B cell (primary cell): ENCODE measurements at regions of chr6 and their contacts with region 1.

Region 1: DNA sequence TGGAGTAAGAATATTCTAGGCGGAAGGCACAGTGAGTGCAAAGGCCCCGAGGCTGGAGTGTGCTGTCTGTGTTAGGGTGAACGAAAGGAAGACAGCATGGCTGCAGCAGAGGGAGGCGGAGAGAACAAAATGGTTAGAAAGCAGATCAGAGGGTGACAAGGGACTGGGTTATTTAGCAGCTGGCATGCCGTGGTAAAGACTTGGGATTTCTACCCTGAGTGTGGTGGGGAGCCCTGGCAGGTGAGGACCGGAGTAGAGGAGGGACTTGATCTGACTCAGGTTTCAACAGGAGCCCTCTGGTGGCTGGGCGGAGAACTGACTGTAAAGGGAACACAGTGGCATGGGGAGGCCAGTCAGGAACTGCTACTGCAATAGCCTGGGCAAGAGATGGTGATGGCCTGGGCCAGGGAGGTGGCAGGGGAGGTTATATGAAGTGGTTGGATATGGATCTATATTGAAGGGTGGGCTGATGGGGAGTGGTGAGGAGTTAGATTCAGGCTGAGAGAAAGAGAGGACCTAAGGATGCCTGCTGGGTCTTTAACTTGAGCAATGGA is 38.0 kb downstream of the PIM1 start:
- DNase-seq: peak; percentile 88
- ATAC-seq: peak; percentile 95
- H3K4me3 ChIP-seq: no peak overlapping the region
- H3K4me3 Mint-ChIP-seq: no peak overlapping the region
- H3K27ac ChIP-seq: no peak overlapping the region
- H3K27ac Mint-ChIP-seq: peak overlapping the region; percentile 3
- H3K4me1 ChIP-seq: peaks cover 4 to 12% of the 10 kb centered on the region in 2 donors
- H3K4me1 Mint-ChIP-seq: peaks cover 14% of the 10 kb centered on the region
- H3K27me3 ChIP-seq: peaks cover 0 to 4% (median 0%) of the 10 kb centered on the region in 4 experiments
- H3K27me3 Mint-ChIP-seq: no peaks in the 10 kb centered on the region
- CTCF ChIP-seq: peak; percentile 85

Region 2: DNA sequence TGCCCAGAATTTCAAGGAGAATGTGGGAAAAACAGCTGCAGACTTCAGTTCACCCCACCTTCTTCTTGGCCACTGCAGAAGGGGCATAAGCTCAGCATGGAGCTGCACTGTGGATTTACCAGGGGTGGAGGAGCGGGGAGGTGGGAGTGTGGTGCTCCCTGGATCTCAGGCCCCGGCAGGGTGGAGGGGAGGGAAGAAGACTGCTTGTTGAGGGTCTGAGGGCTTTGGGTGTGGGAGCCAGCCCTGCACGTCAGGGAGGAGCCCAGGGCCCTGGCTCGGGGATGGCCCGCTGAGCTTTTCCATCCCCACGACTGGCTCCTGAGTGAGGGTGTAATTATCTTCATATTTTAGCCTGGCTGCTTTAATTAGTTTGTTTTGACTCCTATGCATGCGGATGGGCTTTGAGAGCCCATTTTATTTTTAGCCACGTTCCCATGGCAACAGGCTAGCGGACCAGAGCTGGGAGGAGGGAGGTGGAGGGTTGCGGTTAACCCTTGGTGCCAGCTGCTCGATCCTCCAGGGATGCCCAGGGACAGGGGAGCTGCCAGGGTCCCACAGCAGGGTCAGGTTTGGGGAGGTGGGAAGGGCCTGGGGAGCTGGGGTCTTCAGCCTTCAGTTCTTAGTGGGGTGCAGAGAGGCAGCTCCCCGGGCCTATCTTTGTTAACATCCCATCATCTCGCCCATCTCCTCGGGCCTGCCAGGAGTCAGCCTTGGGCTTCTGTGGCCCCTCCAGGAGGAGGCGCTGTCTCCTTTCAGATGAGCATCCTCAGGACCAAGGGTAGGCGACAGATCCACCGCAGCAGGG is 442.2 kb before region 1 on chr6:
- CTCF ChIA-PET with region 1: interaction called, 51 read pairs
- POLR2A ChIA-PET with region 1: no interaction called
- intact Hi-C with region 1: loop called (anchors 1 kb)
- DNase-seq: peak; percentile 88
- ATAC-seq: peak; percentile 91
- H3K4me3 ChIP-seq: peak overlapping the region in 1 of 5 experiments; percentile 9
- H3K4me3 Mint-ChIP-seq: peak overlapping the region; percentile 60
- H3K27ac ChIP-seq: no peak overlapping the region
- H3K27ac Mint-ChIP-seq: peak overlapping the region; percentile 60
- H3K4me1 ChIP-seq: peaks cover 45 to 54% of the 10 kb centered on the region in 2 donors
- H3K4me1 Mint-ChIP-seq: peaks cover 41% of the 10 kb centered on the region
- H3K27me3 ChIP-seq: peaks cover 0 to 3% (median 0%) of the 10 kb centered on the region in 4 experiments
- H3K27me3 Mint-ChIP-seq: no peaks in the 10 kb centered on the region
- CTCF ChIP-seq: peak; percentile 92

Region 3: DNA sequence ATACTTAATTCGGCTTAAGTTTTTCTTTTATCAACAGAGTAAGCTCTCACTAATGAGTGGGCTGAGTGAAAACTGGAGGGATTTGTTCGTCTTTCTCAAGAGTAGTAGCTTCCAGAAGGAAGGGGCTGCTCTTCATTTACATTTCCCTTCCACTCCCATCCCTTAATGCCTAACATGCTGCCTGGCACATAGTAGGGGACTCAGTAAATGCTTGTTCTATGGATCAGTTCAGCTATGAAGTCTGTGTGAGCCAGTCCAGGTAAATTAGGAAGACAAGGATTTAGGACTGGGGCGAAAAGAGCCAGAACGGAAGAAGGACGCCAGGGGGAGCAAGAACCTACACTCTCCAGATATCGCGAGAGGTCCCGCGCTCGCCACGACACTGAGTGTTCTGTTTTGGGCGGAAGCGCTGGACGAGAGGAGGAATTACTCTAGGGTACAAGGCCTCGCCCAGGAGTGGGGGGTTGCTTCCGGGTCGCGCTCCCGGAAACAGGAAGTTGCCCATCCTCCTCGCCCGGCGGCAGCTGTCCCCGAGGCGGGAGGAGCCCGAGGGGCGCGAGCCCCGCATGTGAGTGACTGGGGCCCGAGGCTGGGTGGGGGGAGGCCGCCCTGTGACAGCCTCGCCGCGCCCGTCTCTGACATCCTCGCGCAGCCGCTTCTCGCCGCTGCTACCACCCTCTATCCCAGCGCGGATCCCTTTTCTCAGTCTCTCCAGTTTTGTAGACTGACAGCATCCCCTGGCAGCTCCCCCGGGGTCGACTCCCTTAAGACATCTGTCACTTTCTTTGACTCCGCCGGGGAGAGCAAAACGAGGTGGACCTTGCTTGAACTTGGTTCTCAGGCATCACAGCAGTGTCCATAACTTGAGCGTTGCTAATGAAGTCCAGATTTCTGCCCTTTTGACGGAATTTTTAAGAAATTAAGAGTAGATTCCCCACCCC is 322.2 kb before region 1 on chr6 and contains the start of gene C6orf89:
- CTCF ChIA-PET with region 1: interaction called, 24 read pairs
- POLR2A ChIA-PET with region 1: no interaction called
- intact Hi-C with region 1: loop called (anchors 1 kb)
- DNase-seq: peak; percentile 98
- ATAC-seq: peak; percentile 99
- H3K4me3 ChIP-seq: peak within 1 kb of the TSS; percentile 68 to 89 (median 80)
- H3K4me3 Mint-ChIP-seq: peak within 1 kb of the TSS; percentile 90
- H3K27ac ChIP-seq: peak within 1 kb of the TSS; percentile 82 to 92
- H3K27ac Mint-ChIP-seq: peak within 1 kb of the TSS; percentile 92
- H3K4me1 ChIP-seq: peaks cover 17 to 22% of the 10 kb centered on the region in 2 donors
- H3K4me1 Mint-ChIP-seq: peaks cover 32% of the 10 kb centered on the region
- H3K27me3 ChIP-seq: no peaks in the 10 kb centered on the region
- H3K27me3 Mint-ChIP-seq: no peaks in the 10 kb centered on the region
- CTCF ChIP-seq: peak; percentile 86
- total RNA-seq, gene C6orf89: 34.2 and 35.3 TPM in 2 replicates

Region 4: DNA sequence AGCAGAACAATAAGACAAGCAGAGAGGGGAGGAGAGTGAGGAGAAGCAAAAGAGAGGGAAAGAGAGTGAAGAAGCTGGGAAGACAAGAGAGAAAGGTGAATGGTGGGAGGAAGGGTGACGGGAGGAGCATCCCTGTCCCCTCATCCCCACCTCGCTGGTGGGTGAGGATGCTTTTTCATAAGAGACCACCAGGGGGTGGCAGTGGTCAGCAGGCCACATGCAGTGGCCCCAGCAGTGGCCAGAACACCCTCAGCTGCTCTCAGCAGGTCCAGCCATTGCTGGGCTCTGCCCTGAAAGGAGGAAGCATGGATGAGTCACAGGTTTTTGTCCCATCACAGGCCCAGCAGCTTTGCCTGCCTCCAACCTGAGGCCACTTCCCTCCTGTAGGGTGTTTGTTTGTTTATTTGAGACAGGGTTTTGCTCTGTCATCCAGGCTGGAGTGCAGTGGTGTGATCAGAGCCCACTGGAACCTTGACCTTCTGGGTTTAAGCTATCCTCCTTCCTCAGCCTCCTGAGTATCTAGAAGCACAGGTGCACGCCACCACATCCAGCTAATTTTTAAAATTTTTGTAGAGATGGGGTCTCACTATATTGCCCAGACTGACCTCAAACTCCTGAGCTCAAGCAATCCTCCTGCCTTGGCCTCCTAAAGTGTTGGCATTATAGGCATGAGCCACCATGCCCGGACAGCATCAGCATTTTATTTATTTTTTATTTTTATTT is 178.6 kb before region 1 on chr6:
- CTCF ChIA-PET with region 1: interaction called, 587 read pairs
- POLR2A ChIA-PET with region 1: no interaction called
- intact Hi-C with region 1: loop called (anchors 1 kb)
- DNase-seq: peak; percentile 69
- ATAC-seq: peak; percentile 78
- H3K4me3 ChIP-seq: no peak overlapping the region
- H3K4me3 Mint-ChIP-seq: no peak overlapping the region
- H3K27ac ChIP-seq: no peak overlapping the region
- H3K27ac Mint-ChIP-seq: peak overlapping the region; percentile 84
- H3K4me1 ChIP-seq: peaks cover 0 to 8% of the 10 kb centered on the region in 2 donors
- H3K4me1 Mint-ChIP-seq: peaks cover 24% of the 10 kb centered on the region
- H3K27me3 ChIP-seq: no peaks in the 10 kb centered on the region
- H3K27me3 Mint-ChIP-seq: no peaks in the 10 kb centered on the region
- CTCF ChIP-seq: peak; percentile 80

Region 5: GRCh38 chr6:37083243-37084138 is 124.5 kb before region 1 on chr6:
- CTCF ChIA-PET with region 1: no interaction called
- POLR2A ChIA-PET with region 1: no interaction called
- intact Hi-C with region 1: no loop called
- DNase-seq: no peak
- ATAC-seq: no peak
- H3K4me3 ChIP-seq: no peak overlapping the region
- H3K4me3 Mint-ChIP-seq: no peak overlapping the region
- H3K27ac ChIP-seq: no peak overlapping the region
- H3K27ac Mint-ChIP-seq: no peak overlapping the region
- H3K4me1 ChIP-seq: no peaks in the 10 kb centered on the region
- H3K4me1 Mint-ChIP-seq: no peaks in the 10 kb centered on the region
- H3K27me3 ChIP-seq: peaks cover 0 to 2% (median 0%) of the 10 kb centered on the region in 4 experiments
- H3K27me3 Mint-ChIP-seq: no peaks in the 10 kb centered on the region
- CTCF ChIP-seq: no peak

Region 6: DNA sequence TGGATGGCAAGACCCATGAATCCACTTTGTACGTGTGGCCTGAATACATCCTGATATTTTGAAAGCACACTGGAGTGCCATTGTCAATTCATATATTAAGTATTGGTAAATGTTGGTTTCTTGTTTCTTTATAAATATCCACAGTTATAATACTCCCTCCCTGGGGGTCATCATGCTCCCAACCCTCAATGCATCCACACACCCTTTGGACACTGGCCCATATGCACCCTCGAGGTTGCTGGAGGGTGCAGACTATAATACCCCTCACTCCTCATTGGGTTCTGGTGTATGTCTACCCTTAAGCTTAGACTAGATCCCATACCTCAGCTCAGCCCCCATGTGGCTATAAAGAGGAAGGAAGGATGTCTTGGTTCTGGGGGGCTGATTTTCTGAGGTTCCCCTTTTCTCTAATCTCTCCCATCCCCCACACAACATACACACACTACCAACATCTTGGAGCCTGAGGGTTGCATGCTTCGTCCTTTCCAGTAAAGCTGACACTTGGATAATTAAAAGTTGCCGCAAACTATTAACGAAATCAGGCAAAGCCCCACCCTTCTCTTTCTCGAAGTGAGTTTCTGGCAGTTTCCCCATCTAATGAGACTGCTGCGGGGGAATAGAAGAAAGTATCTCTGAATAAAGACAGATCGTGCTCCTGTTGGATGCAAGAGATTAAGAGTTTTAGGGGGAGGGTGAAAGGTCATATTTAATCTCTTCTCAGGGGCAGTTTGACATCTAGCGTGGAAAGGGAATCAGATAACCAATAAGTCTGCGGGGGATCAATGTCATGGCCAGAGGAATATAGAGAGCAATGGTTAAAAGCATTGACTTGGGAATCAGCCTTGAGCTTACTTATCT is 30.7 kb before region 1 on chr6:
- CTCF ChIA-PET with region 1: interaction called, 321 read pairs
- POLR2A ChIA-PET with region 1: interaction called, 4 read pairs
- intact Hi-C with region 1: loop called (anchors 1 kb)
- DNase-seq: peak; percentile 86
- ATAC-seq: peak; percentile 74
- H3K4me3 ChIP-seq: peak overlapping the region in 2 of 5 experiments; percentile 12 to 25
- H3K4me3 Mint-ChIP-seq: peak overlapping the region; percentile 80
- H3K27ac ChIP-seq: no peak overlapping the region
- H3K27ac Mint-ChIP-seq: peak overlapping the region; percentile 83
- H3K4me1 ChIP-seq: peaks cover 56 to 58% of the 10 kb centered on the region in 2 donors
- H3K4me1 Mint-ChIP-seq: peaks cover 60% of the 10 kb centered on the region
- H3K27me3 ChIP-seq: no peaks in the 10 kb centered on the region
- H3K27me3 Mint-ChIP-seq: no peaks in the 10 kb centered on the region
- CTCF ChIP-seq: peak; percentile 36

Region 7: GRCh38 chr6:37222125-37222967 is 14.4 kb after region 1 on chr6:
- CTCF ChIA-PET with region 1: interaction called, 3 read pairs
- POLR2A ChIA-PET with region 1: no interaction called
- intact Hi-C with region 1: loop called (anchors 1 kb)
- DNase-seq: peak; percentile 73
- ATAC-seq: peak; percentile 91
- H3K4me3 ChIP-seq: peak overlapping the region; percentile 38 to 86 (median 69)
- H3K4me3 Mint-ChIP-seq: peak overlapping the region; percentile 91
- H3K27ac ChIP-seq: no peak overlapping the region
- H3K27ac Mint-ChIP-seq: no peak overlapping the region
- H3K4me1 ChIP-seq: peaks cover 5 to 12% of the 10 kb centered on the region in 2 donors
- H3K4me1 Mint-ChIP-seq: peaks cover 11% of the 10 kb centered on the region
- H3K27me3 ChIP-seq: no peaks in the 10 kb centered on the region
- H3K27me3 Mint-ChIP-seq: no peaks in the 10 kb centered on the region
- CTCF ChIP-seq: no peak